Cardiac septum (tissue), 1 donor: ENCODE measurements at regions of chr7 and their contacts with region 1.

Region 1: GRCh38 chr7:45136106-45137060 is 21.2 kb upstream of the RAMP3 start:
- DNase-seq: no peak

Region 2: DNA sequence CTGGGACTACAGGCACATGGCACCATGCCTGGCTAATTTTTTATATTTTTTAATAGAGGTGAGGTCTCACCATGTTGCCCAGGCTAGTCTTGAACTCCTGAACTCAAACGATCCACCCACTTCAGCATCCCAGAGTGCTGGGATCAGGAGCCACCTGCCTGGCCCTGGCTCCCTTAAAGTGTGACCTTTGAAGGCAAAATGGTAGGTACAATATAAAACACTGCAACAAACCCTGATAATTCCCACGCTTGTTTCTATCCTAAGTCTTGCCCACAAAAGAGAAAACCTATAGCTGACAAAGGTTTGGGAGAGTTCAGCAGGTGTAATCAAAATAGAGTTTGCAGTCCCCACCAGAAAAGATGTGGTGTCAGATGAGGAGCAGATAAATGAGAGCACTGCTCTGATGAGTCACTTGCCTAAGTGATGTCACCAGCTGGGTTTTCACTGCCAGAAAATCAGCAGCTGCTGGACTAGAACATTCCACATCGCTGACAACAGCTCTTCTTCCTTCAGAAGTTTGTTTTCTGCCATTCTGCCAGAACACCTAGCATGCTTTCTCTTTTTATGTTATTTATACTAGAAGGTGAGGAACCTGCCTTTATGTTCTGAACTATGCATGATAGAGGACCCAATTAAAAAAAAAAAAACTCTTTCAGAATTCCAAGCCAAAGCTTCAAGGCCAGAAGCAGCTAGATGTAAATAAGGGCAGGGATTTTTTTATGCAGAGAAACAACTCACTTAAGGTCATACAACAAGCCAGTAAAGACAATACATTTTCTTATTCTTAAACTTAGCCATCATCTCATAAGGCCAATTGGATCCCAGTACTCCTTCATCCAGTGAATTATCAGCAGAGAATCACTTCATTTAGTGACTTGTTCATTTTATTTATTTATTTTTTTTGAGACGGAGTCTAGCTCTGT is 269.0 kb before region 1 on chr7:
- intact Hi-C with region 1: loop called (anchors 5 kb)
- DNase-seq: no peak

Region 3: DNA sequence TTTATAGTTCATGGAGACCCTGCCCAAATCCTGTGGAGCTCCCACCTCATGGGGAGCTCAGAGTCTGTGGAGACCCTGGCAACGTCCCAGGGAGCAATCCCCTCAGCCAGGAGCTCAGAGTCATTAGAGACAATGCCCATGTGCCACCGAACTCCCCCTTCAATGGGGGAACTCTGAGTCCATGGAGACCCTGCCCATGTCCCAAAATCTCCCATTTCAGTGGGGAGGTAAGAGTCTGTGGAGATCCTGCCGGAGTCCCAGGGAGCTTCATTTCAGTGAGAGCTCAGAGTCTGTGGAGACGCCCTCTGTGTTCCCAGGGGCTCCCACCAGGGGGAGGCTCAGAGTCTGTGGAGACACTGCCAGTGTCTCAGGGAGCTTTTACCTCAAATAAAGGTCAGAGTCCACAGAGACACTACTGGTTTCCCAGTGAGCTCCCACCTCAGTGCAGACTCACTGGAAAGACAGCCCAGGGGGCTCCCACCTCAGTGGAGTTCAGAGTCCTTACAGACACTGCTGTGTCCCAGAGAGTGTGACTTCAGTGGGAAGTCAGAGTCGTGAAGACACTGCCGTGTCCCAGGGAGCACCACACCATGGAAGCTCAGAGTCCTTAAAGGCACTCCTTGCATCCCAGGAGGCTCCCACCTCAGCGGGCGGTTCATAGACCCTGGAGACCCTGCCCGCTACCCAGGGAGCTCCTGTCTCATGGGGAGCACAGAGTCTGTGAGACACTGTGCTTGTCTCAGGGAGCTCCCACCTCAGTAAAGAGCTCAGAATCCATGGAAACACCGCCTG is 162.6 kb before region 1 on chr7:
- intact Hi-C with region 1: loop called (anchors 2 kb)
- DNase-seq: peak; percentile 72